SK-N-SH (cell line): ENCODE measurements at regions of chr7 and their contacts with region 1.

Region 1: DNA sequence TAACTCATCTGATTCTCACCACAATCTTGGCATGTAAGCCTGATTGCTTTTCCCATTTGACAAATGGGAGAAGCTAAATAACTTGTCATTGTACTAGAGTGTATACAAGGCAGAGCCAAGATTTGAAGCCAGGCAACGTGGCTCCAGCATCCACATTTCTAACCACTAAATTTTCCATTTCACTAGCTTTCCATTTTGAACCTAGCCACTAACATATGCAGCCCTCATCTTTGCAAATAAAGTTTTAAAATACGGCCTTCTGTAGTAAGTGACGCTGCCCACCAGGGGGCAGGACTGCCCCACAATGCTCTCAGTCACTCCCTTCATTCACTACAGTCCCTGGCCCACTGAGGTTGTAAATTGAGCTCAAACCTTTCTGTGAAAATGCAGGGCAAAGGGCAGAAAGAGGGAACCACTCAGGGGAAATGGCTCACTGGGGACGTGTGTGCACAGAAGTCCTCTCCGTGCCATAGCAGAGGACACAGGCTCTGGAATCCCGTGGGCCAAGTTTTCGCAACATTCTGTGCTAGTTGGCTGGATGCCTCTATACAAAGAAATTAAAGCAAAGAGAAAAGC is 315.7 kb downstream of the TNS3 start:
- DNase-seq: peak; percentile 83
- H3K4me3 ChIP-seq: no peak overlapping the region; a peak in 1 of 4 replicates
- H3K27ac ChIP-seq: no peak overlapping the region
- H3K4me1 ChIP-seq: peaks cover 0 to 2% of the 10 kb centered on the region in 2 experiments; a peak in 1 of 4 replicates
- H3K27me3 ChIP-seq: no peaks in the 10 kb centered on the region
- CTCF ChIP-seq: peak; percentile 99
- EP300 ChIP-seq: no peak
- RAD21 ChIP-seq: peak; percentile 100

Region 2: GRCh38 chr7:47080816-47081215 is 185.4 kb before region 1 on chr7:
- CTCF ChIA-PET with region 1: no interaction called
- POLR2A ChIA-PET with region 1: no interaction called
- DNase-seq: no peak
- H3K4me3 ChIP-seq: no peak overlapping the region
- H3K27ac ChIP-seq: no peak overlapping the region
- H3K4me1 ChIP-seq: no peaks in the 10 kb centered on the region
- H3K27me3 ChIP-seq: no peaks in the 10 kb centered on the region
- CTCF ChIP-seq: no peak
- EP300 ChIP-seq: no peak
- RAD21 ChIP-seq: no peak

Region 3: DNA sequence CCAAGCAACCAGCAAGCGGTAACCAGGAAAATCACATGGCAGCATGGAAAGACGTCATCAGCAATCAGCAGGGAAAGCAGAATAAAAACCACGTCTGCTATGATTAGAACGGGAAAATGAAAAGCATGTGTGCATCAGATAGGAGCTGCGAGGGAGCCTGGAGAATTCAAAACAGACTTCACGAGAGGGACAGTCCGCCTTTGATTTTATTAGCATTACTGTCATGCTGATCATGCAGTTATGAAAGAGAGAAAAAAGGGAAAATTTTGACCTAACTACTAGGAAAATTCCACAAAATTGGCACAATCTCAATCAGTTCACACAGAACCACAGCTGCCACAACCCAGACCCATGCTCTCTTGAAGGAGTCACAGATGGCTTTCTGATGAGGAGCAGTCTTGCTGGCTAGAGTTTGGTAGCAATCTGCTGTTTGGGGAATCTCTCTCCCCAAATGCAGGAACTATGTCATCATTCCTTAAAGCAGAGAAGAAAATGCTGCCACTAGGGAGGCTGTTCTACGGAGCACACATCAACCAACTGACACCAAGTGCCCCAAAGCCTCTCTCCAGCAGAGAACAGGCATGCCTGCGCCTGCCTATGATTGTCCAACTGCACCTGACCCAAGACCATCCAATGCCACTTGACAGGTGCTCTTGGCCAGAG is 19.8 kb after region 1 on chr7:
- CTCF ChIA-PET with region 1: interaction called, 51 read pairs
- POLR2A ChIA-PET with region 1: no interaction called
- DNase-seq: peak; percentile 85
- H3K4me3 ChIP-seq: no peak overlapping the region
- H3K27ac ChIP-seq: peak overlapping the region; percentile 77 to 80
- H3K4me1 ChIP-seq: peaks cover 4 to 20% of the 10 kb centered on the region in 2 experiments; a peak in 3 of 4 replicates
- H3K27me3 ChIP-seq: no peaks in the 10 kb centered on the region
- CTCF ChIP-seq: peak; percentile 47
- EP300 ChIP-seq: peak; percentile 62 to 88; a peak in 3 of 4 replicates
- RAD21 ChIP-seq: peak; percentile 33

Region 4: GRCh38 chr7:47351233-47352154 is 85.3 kb after region 1 on chr7:
- CTCF ChIA-PET with region 1: interaction called, 20 read pairs
- POLR2A ChIA-PET with region 1: no interaction called
- DNase-seq: no peak
- H3K4me3 ChIP-seq: no peak overlapping the region
- H3K27ac ChIP-seq: no peak overlapping the region
- H3K4me1 ChIP-seq: peaks cover 0 to 16% of the 10 kb centered on the region in 2 experiments; a peak in 1 of 4 replicates
- H3K27me3 ChIP-seq: no peaks in the 10 kb centered on the region
- CTCF ChIP-seq: no peak
- EP300 ChIP-seq: no peak
- RAD21 ChIP-seq: peak; percentile 52

Region 5: GRCh38 chr7:47444379-47445057 is 178.3 kb after region 1 on chr7:
- CTCF ChIA-PET with region 1: interaction called, 36 read pairs
- POLR2A ChIA-PET with region 1: no interaction called
- DNase-seq: peak; percentile 49
- H3K4me3 ChIP-seq: no peak overlapping the region
- H3K27ac ChIP-seq: no peak overlapping the region
- H3K4me1 ChIP-seq: peaks cover 0 to 11% of the 10 kb centered on the region in 2 experiments; a peak in 2 of 4 replicates
- H3K27me3 ChIP-seq: no peaks in the 10 kb centered on the region
- CTCF ChIP-seq: peak; percentile 76
- EP300 ChIP-seq: no peak
- RAD21 ChIP-seq: peak; percentile 72

Region 6: GRCh38 chr7:47571331-47572093 is 305.3 kb after region 1 on chr7:
- CTCF ChIA-PET with region 1: interaction called, 16 read pairs
- POLR2A ChIA-PET with region 1: no interaction called
- DNase-seq: peak; percentile 64
- H3K4me3 ChIP-seq: no peak overlapping the region; a peak in 1 of 4 replicates
- H3K27ac ChIP-seq: peak overlapping the region; percentile 71 to 95
- H3K4me1 ChIP-seq: peaks cover 33 to 53% of the 10 kb centered on the region in 2 experiments; a peak in 3 of 4 replicates
- H3K27me3 ChIP-seq: no peaks in the 10 kb centered on the region
- CTCF ChIP-seq: 0 out of 2 replicates have a peak, but pooled peaks have one; percentile 6
- EP300 ChIP-seq: peak in 1 of 2 experiments; percentile 59; a peak in 1 of 4 replicates
- RAD21 ChIP-seq: peak; percentile 18; the same call in 1 of the 2 replicates

Region 7: GRCh38 chr7:47818796-47819606 is 552.8 kb after region 1 on chr7:
- CTCF ChIA-PET with region 1: interaction called, 275 read pairs
- POLR2A ChIA-PET with region 1: no interaction called
- DNase-seq: peak; percentile 81
- H3K4me3 ChIP-seq: no peak overlapping the region
- H3K27ac ChIP-seq: peak overlapping the region; percentile 48 to 66; a peak in 3 of 4 replicates
- H3K4me1 ChIP-seq: peaks cover 7 to 14% of the 10 kb centered on the region in 2 experiments; a peak in 2 of 4 replicates
- H3K27me3 ChIP-seq: no peaks in the 10 kb centered on the region
- CTCF ChIP-seq: peak; percentile 100
- EP300 ChIP-seq: no peak
- RAD21 ChIP-seq: peak; percentile 99

Region 8: GRCh38 chr7:48109848-48110663 is 843.8 kb after region 1 on chr7:
- CTCF ChIA-PET with region 1: interaction called, 20 read pairs
- POLR2A ChIA-PET with region 1: no interaction called
- DNase-seq: peak; percentile 85
- H3K4me3 ChIP-seq: no peak overlapping the region; a peak in 1 of 4 replicates
- H3K27ac ChIP-seq: no peak overlapping the region
- H3K4me1 ChIP-seq: peaks cover 0 to 4% of the 10 kb centered on the region in 2 experiments; a peak in 1 of 4 replicates
- H3K27me3 ChIP-seq: no peaks in the 10 kb centered on the region
- CTCF ChIP-seq: peak; percentile 100
- EP300 ChIP-seq: no peak
- RAD21 ChIP-seq: peak; percentile 95